Activated CD8-positive, alpha-beta memory T cell treated with anti-CD3 and anti-CD28 coated beads, Interleukin-2, amount 10 ng/mL, durations not matched to agents 7 days and 5 days (primary cell): ENCODE measurements at regions of chr20 and their contacts with region 1.

Region 1: GRCh38 chr20:2688041-2688591 is 4.5 kb upstream of the EBF4 start:
- DNase-seq: peak; percentile 89
- ATAC-seq: peak; percentile 85
- H3K4me3 Mint-ChIP-seq: peak overlapping the region; percentile 40
- H3K27ac Mint-ChIP-seq: peak overlapping the region; percentile 52
- H3K4me1 Mint-ChIP-seq: peaks cover 32% of the 10 kb centered on the region
- H3K27me3 Mint-ChIP-seq: peaks cover 39% of the 10 kb centered on the region

Region 2: DNA sequence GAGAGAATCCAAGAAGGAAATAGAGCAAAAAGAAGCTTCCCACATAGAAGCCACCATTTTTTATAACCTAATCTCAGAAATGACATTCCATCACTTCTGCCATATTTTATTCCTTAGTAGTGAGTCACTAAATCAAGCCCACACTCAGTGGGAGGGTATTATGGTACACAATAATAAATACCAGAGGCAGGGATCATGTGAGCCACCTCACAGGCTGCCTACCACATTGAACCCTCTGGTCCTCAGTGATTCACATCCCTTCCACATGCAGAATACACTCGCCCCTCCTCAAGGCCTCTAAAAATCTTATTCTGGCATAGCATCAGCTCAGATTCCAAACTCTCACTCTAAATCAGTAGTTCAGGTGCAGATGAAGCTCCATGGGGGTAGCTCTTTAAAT is 102.3 kb before region 1 on chr20:
- CTCF ChIA-PET with region 1: no interaction called
- DNase-seq: peak; percentile 9
- ATAC-seq: no peak
- H3K4me3 Mint-ChIP-seq: no peak overlapping the region
- H3K27ac Mint-ChIP-seq: no peak overlapping the region
- H3K4me1 Mint-ChIP-seq: no peaks in the 10 kb centered on the region
- H3K27me3 Mint-ChIP-seq: peaks cover 22% of the 10 kb centered on the region

Region 3: DNA sequence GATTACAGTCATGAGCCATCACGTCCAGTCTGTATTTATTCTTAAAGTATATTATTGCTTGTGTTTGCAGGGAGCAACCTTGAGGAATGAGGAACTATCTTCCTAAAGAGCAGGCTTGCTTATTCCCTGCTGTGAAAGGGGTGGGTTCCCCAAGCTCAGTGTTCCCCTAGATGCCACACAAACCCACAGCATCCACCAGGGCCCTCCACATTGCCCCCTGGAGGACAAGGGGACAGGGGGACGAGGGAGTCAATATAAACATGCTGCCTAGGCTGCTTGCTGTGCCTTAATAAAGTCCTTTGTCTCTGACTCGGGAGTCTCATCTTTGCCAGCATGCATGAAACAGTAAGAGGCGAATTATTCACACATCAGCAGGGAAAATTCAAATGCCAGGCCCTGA is 16.1 kb before region 1 on chr20:
- CTCF ChIA-PET with region 1: interaction called, 24 read pairs
- DNase-seq: no peak
- ATAC-seq: no peak
- H3K4me3 Mint-ChIP-seq: no peak overlapping the region
- H3K27ac Mint-ChIP-seq: no peak overlapping the region
- H3K4me1 Mint-ChIP-seq: no peaks in the 10 kb centered on the region
- H3K27me3 Mint-ChIP-seq: peaks cover 7% of the 10 kb centered on the region

Region 4: GRCh38 chr20:2706688-2707352 is 18.7 kb after region 1 on chr20:
- CTCF ChIA-PET with region 1: interaction called, 13 read pairs
- DNase-seq: peak; percentile 57
- ATAC-seq: peak; percentile 70
- H3K4me3 Mint-ChIP-seq: no peak overlapping the region
- H3K27ac Mint-ChIP-seq: peak overlapping the region; percentile 61
- H3K4me1 Mint-ChIP-seq: peaks cover 19% of the 10 kb centered on the region
- H3K27me3 Mint-ChIP-seq: peaks cover 8% of the 10 kb centered on the region

Region 5: GRCh38 chr20:2742934-2743559 is 54.9 kb after region 1 on chr20:
- CTCF ChIA-PET with region 1: interaction called, 101 read pairs
- DNase-seq: peak; percentile 80
- ATAC-seq: peak; percentile 81
- H3K4me3 Mint-ChIP-seq: no peak overlapping the region
- H3K27ac Mint-ChIP-seq: peak overlapping the region; percentile 47
- H3K4me1 Mint-ChIP-seq: peaks cover 32% of the 10 kb centered on the region
- H3K27me3 Mint-ChIP-seq: peaks cover 12% of the 10 kb centered on the region

Region 6: DNA sequence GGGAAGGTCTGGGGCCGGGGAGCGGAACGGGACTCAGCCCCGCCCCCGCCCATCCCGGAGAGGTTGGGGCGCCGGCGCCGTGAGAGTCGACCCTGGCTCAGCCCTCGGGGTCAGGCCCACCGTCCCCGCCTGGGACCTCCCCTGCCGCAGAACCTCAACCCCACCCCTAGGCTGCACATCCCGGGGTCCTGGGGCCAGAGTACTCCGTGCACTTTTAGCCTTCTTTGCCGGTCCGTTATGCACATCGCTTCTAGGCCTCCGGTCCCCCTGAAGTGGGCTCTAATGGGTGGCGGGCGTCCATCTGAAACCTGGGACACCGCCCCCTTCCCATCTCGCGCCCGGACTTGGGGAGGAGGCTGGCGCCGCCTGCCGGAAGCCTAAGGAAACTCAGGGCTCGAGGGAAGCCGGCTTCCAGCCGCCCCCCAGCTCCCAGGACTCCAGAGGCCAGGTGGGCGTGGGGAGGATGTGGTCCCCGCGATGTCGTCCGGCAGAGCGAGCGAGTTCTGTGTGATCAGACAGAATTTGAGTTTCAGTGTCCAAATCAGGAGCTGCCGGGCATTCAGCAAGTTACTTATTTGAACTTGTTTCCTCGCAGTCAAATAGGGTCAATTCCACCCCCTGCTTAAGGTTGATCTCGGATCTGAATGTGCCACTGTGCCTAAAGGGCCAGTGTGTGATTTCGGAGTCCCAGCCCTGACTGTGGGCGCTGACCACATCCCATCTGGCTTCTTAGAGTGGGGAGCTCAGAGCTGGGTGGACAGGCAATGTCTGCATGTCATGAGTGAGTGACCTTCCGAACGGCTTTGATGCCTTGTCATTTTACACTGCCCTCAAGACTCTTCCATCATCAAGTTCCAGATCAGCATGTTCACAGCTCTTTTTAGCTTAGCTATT is 64.7 kb after region 1 on chr20:
- CTCF ChIA-PET with region 1: interaction called, 87 read pairs
- DNase-seq: peak; percentile 52
- ATAC-seq: peak; percentile 38
- H3K4me3 Mint-ChIP-seq: peak overlapping the region; percentile 62
- H3K27ac Mint-ChIP-seq: no peak overlapping the region
- H3K4me1 Mint-ChIP-seq: peaks cover 17% of the 10 kb centered on the region
- H3K27me3 Mint-ChIP-seq: peaks cover 70% of the 10 kb centered on the region

Region 7: DNA sequence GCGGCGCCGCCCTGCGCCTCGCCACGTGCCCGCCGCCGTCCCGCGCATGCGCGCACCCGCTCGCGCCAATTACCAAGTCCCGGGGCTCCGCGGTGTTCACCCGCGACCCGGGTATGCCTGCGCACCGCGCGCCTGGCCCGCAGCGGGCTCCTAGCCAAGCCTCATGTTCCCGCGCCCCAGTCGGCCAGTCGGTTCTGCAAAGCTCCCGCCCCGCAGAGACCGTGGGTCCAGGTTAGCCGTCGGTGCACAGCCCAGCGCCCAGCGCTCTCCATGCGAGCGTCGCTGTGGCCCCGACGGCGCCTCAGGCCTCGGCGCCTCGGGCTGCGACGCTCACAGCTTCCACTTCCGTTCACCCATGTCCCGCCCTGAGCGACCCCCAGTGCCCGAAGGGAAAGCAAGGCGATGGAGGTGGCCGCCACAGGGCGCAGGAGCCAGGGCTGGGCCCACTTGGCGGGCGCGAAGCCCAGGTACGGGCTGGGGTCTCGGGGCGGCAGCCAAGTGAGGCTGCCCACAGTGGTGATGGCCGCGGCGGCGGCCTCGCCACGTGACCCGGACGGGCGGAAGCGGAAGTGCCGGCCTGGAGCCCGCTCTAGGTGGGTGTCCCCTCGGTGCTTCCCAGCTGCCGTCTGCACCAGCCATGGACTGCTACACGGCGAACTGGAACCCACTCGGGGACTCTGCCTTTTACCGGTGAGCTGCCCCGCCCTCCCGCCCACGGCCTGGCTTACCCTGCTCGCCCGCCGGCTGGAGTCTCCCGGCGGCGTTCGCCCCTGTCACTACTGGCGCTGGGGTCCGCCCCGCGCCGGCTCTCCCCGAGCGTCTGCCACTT is 152.2 kb after region 1 on chr20 and contains the starts of genes PCED1A and VPS16:
- CTCF ChIA-PET with region 1: interaction called, 12 read pairs
- DNase-seq: peak; percentile 92
- ATAC-seq: peak; percentile 98
- H3K4me3 Mint-ChIP-seq: peak within 1 kb of the TSS; percentile 82
- H3K27ac Mint-ChIP-seq: peak within 1 kb of the TSS; percentile 84
- H3K4me1 Mint-ChIP-seq: peaks cover 23% of the 10 kb centered on the region
- H3K27me3 Mint-ChIP-seq: no peaks in the 10 kb centered on the region
- total RNA-seq, gene PCED1A: 21.9 to 30.6 TPM
- total RNA-seq, gene VPS16: 49.2 to 64.9 TPM

Region 8: DNA sequence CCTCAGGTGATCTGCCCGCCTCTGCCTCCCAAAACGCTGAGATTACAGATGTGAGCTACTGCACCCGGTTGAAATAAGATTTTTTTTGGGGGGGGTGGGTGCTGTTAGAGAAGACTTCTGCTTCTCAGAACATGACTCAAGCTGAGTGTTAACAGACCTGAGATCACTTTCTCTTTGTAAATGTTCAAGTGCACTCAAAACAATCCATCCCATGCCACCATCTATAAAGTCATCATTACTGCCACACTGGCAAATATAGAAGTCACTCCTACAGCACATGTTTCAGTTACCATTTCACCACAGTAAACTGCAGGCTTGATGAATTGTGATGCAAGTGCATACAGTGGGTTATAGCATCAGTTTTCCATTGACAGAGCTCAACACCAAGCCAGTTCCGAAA is 161.4 kb after region 1 on chr20:
- CTCF ChIA-PET with region 1: interaction called, 21 read pairs
- DNase-seq: peak; percentile 14
- ATAC-seq: no peak
- H3K4me3 Mint-ChIP-seq: no peak overlapping the region
- H3K27ac Mint-ChIP-seq: no peak overlapping the region
- H3K4me1 Mint-ChIP-seq: peaks cover 45% of the 10 kb centered on the region
- H3K27me3 Mint-ChIP-seq: no peaks in the 10 kb centered on the region

Region 9: DNA sequence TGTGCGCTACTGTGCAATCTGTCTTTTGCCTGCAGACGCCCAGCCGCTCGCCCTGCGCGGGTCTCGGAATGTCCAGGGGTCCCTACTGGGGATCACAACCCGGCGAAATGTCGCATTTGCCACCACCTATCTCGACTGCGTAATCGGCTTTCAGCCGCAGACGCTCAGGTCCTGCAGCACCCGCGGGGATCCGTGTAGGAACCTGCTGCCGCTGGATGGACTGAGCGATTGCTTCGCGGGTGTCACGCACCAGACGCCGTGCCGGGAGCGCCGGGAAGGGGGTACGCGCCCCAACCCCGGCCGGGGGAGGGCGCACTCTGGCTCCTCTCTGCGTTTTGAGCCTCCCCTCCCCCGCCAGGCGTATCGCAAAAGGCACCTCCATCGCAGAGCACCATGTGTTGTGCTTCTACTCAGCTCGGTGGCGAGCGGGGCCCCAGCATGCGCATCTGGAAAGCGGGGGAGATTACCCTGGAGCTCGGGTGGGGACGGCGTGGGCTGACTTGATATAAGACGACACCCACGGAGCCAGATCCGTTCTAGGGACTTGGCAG is 184.4 kb after region 1 on chr20:
- CTCF ChIA-PET with region 1: no interaction called
- DNase-seq: peak; percentile 84
- ATAC-seq: peak; percentile 51
- H3K4me3 Mint-ChIP-seq: peak overlapping the region; percentile 85
- H3K27ac Mint-ChIP-seq: peak overlapping the region; percentile 94
- H3K4me1 Mint-ChIP-seq: peaks cover 54% of the 10 kb centered on the region
- H3K27me3 Mint-ChIP-seq: no peaks in the 10 kb centered on the region